Activated T-helper 1 cell treated with anti-CD3 and anti-CD28 coated beads, Interleukin-12 subunit alpha, Interleukin-12 subunit beta, Interleukin-2, Interleukin-4 antibody, amounts not matched to agents 30 ng/mL and 10 ng/mL and 1 ng/mL, durations not matched to agents 14 hours and 24 hours and 36 hours (primary cell): ENCODE measurements at regions of chr16 and their contacts with region 1.

Region 1: GRCh38 chr16:29694384-29695195 is 15.6 kb downstream of the QPRT start:
- DNase-seq: no peak
- H3K4me3 Mint-ChIP-seq: no peak overlapping the region
- H3K27ac Mint-ChIP-seq: no peak overlapping the region
- H3K4me1 Mint-ChIP-seq: peaks cover 12% of the 10 kb centered on the region
- H3K27me3 Mint-ChIP-seq: no peaks in the 10 kb centered on the region

Region 2: GRCh38 chr16:30018731-30019158 is 324.2 kb after region 1 on chr16:
- intact Hi-C with region 1: loop called (anchors 2 kb)
- DNase-seq: no peak
- H3K4me3 Mint-ChIP-seq: no peak overlapping the region
- H3K27ac Mint-ChIP-seq: peak overlapping the region; percentile 1
- H3K4me1 Mint-ChIP-seq: peaks cover 17% of the 10 kb centered on the region
- H3K27me3 Mint-ChIP-seq: peaks cover 12% of the 10 kb centered on the region

Region 3: DNA sequence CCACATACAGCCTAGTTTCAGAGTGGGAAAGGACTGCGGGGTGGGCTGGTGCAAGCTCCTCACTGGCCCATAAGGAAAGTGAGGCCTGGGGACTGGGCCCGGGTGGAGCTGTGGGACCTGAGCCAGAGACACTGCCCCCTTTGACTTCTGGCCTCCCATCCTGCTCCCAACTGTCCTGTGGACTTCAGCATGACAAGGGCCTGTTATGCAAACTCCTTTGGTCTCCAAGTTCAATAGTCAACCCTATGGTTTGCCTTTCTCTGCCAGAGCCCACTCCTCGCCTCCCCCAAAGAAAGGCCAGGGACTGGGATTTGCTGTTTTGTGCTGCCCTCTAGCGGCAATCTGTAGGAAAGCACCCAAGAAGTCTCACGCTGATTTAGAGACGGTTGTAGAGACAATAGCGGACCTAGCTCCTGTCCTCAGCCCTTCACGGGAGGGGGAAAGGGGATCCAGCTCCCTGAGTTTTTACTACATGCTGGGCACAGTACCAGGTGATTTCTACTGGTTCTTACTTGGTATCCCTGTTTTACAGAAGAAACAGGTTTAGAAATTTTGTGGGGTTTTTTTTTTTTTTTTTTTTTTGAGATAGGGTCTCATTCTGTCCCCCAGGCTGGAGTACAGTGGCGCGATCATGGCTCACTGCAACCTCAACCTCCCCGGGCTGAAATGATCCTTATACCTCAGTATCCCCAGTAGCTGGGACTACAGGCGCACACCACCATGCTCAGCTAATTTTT is 337.7 kb after region 1 on chr16:
- intact Hi-C with region 1: loop called (anchors 1 kb)
- DNase-seq: peak; percentile 61
- H3K4me3 Mint-ChIP-seq: no peak overlapping the region
- H3K27ac Mint-ChIP-seq: no peak overlapping the region
- H3K4me1 Mint-ChIP-seq: peaks cover 16% of the 10 kb centered on the region
- H3K27me3 Mint-ChIP-seq: peaks cover 48% of the 10 kb centered on the region